Cardiac septum (tissue), 1 donor: ENCODE measurements at regions of chr12 and their contacts with region 1.

Region 1: DNA sequence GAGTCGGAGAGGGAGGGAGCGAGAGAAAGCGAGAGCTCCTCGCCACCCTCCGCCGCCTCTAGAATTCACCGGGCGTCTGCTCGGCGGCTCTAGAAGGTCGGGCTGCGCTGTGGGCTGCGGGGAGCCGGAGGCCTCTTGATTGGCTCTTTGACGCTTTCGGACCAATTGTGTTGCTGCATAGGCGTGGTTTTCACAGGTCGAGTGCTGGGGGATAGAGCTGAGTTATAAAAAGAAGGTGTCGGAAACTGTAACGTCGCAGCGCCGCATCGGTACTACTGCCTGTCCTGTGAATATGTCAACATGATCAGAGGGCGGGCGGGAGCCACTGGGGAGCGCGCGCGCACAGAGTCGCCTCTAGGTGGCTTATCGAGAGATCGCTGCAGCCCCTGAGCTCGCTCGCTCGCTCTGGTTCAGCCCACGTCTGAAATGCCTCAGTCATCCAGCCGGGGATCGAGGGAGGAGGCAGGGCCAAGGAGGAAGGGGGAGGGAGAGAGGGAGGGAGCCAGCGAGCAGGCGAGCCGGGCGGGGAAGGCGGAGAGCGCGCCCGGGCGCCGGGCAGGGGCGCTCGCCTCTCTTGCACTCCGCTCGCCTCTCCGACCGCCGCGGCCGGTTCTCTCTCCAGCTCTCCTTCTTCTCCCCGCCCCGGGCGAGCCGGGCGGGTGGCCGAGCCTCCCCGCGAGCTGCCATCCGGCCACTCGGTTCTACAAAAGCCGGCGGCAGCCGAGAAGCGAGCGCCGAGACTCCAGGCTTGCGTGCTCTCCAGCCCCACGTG is at the start of gene TBX3:
- DNase-seq: peak; percentile 94
- total RNA-seq, gene TBX3: 17.1 TPM

Region 2: DNA sequence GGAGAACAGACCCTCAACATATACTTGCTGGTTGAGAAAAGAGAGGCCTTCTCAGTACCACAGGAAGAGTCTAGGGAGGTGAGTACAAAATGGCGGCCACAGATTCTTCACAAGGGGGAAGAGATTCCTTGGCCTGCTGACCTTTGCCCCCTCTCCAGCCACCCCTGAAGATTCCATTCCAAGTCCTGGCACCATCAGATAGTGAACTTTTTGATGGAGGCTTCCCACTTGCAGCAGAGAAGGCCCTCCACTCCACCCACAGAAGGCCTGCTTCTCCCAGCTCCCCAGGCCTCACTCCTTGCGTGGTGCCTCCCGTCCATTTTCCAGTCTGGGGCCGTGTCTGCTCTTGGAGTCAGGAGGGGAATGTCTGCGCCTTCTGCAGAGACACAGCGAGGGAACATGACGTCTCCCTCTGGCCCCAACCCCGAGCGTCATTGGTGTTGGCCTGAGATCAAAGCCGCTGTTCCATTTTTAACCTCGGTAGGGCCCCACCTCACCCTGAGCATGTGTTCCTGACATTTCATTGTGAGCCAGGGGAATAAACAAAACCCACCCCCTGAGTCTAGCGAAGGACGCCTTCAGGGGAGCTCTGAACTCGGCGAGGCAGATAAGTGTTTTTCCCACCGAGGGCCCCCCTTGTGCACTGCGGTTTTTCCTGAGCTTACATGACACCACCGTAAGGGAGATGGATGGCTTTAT is 268.4 kb after region 1 on chr12:
- intact Hi-C with region 1: loop called (anchors 10 kb)
- DNase-seq: peak; percentile 82

Region 3: GRCh38 chr12:115227137-115227615 is 542.9 kb after region 1 on chr12:
- intact Hi-C with region 1: loop called (anchors 5 kb)
- DNase-seq: no peak

Region 4: DNA sequence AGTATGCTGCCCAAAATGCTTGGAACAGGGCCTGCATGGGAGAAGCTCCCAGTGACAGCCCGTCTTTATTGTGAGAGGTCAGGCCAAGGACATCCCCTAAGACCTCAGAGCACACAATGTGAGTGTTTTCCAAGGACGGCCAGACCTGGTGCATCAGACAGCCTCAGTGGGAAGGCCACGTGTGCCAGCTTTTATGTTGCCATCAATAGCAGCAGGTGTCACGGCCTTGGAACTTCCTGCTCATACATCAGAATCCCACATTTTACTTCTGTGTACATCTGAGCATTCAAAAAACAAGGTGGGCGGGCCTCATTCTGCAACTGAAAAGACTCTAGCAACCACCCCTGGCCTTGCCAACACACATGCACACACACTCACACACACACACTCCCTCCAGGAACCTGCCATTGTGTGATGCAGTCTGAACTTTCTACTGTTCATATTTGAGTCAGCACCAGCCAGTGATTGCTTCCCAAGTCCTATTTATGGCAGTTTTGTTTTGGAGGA is 752.8 kb after region 1 on chr12:
- intact Hi-C with region 1: loop called (anchors 5 kb)
- DNase-seq: no peak